Calu3 (cell line): ENCODE measurements at regions of chr17 and their contacts with region 1.

Region 1: DNA sequence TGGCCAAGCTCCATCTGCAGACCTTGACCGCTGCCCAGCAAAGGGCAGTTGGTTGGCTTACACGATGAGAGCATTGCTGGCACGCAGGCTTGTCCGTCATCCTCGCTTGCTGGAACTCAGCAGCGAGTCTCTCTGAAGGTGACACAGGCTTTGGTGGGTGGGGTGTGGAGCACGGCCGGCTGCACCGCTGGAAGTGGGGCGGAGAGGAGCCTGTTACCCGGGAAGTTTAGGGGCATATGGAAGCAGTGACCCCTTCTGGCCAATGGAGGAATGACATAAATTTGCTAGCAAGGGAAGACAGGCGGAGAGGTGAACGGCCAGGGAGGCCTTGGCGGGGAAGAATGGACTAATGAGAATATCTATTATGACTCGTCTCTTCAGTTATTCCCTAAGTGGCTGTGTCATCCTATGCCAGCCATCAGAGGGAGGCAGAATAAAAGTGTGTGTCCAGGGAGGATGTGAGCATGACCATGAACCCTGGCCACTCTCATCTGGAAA is 65.9 kb upstream of the SDK2 start:
- DNase-seq: peak; percentile 74
- H3K4me3 Mint-ChIP-seq: no peak overlapping the region
- H3K27ac Mint-ChIP-seq: no peak overlapping the region
- H3K4me1 Mint-ChIP-seq: no peaks in the 10 kb centered on the region
- H3K27me3 Mint-ChIP-seq: peaks cover 86% of the 10 kb centered on the region
- CTCF ChIP-seq: peak; percentile 61

Region 2: GRCh38 chr17:73798111-73798748 is 88.1 kb after region 1 on chr17:
- CTCF ChIA-PET with region 1: interaction called, 10 read pairs
- intact Hi-C with region 1: no loop called
- DNase-seq: peak; percentile 50
- H3K4me3 Mint-ChIP-seq: no peak overlapping the region
- H3K27ac Mint-ChIP-seq: no peak overlapping the region
- H3K4me1 Mint-ChIP-seq: peaks cover 21% of the 10 kb centered on the region
- H3K27me3 Mint-ChIP-seq: peaks cover 53% of the 10 kb centered on the region
- CTCF ChIP-seq: no peak